ENCODE measurements at regions of chr22 and their contacts with region 1.

Region 1: DNA sequence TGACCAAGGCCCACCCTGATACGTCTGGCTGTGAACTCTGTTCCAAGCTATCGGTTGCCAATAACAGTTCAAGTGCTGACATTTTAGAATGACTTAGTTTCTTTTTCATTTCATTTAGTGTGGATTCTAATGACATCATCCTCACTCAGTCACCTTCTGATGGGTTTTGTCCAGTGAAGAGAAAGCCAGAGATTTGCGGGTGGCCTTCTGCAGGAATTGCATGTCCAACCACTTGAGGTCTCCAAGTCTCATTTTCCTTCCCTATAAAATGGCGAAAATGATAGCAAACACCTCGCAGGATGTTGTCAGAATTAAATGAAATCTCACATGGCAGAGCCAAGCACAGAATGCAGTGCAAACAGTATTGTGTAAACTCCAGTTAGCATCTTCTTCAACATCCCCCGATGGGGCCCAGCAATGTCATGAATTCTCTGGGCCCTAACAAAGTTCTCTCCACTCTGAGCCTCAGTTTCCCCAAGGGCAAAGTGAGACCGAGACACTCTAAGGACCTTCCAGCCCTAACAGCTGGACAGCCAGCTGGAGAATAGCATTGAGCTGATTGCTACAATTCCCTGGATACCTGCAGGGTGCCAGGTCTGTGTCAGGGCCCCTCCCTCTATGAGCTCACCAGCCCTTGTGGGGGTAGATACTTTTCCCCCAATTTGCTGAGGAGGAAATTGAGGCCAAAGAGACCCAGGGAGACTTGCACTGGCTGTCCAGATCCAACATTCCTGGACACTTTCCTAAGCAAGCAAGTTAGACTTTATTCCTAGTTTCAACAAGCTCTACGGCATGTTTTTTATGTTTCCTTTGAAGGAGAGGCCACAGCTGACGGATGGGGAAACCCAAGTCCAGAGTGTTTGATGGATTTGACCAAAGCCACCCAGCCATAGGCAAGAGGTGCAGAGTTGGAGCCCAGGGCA is 286.7 kb downstream of the MN1 start:
- DNase-seq: no peak
- H3K4me3 ChIP-seq: no peak overlapping the region
- H3K27ac ChIP-seq: peak overlapping the region in 1 of 2 donors; percentile 28
- H3K4me1 ChIP-seq: peaks cover 0 to 6% of the 10 kb centered on the region in 2 donors
- H3K27me3 ChIP-seq: no peaks in the 10 kb centered on the region
- CTCF ChIP-seq: no peak
- POLR2A ChIP-seq: no peak

Region 2: DNA sequence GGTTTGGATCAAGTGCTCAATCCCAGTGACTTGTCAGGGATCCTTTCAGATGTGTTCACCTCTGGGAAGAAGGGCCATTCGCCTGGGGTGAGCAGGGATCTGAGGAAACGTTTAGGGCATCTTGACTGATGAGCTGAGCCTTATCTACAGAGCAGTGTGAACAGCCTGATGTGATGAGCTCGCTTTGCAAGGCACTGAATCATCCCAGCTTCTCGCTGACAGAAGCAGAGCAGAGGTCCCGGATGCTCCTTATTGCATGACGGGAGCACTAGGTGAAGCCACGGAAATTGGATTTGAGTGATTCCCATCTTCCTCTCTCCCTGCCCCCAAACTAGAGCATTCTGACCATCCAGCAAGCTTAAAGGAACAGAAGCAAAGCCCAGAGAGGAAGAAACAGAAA is 1299.1 kb before region 1 on chr22:
- intact Hi-C with region 1: loop called (anchors 5 kb)
- DNase-seq: no peak
- H3K4me3 ChIP-seq: no peak overlapping the region
- H3K27ac ChIP-seq: no peak overlapping the region
- H3K4me1 ChIP-seq: no peaks in the 10 kb centered on the region
- H3K27me3 ChIP-seq: peaks cover 0 to 4% of the 10 kb centered on the region in 2 donors
- CTCF ChIP-seq: no peak
- POLR2A ChIP-seq: no peak

Region 3: DNA sequence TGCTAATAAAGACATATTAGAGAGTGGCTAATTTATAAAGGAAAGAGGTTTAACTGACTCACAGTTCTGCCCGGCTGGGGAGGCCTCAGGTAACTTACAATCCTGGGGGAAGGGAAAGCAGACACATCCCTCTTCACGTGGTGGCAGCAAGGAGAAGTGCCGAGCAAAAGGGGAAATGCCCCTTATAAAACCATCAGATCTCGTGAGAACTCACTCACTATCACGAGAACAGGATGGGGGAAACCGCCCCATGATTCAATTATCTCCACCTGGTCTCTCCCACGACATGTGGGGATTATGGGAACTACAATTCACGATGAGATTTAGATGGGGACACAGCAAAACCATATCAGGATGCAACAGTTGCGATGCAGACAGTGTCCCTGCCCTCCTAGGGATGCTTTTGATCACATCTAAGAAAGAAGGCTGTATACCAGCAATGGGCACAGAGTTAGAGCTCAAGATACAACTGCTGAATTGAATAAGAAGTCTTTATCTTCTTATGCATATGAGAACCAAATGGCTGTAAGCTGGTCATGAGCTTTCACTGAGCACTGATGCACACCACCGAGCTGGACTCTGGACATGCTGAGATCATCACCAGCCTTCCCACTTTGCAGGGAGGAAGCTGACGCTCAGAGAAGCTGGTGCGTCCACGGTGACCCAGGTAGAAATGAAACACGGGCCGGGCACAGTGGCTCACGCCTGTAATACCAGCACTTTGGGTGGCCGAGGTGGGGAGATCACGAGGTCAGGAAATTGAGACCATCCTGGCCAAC is 31.5 kb after region 1 on chr22:
- intact Hi-C with region 1: no loop called
- DNase-seq: no peak
- H3K4me3 ChIP-seq: no peak overlapping the region
- H3K27ac ChIP-seq: no peak overlapping the region
- H3K4me1 ChIP-seq: no peaks in the 10 kb centered on the region
- H3K27me3 ChIP-seq: peaks cover 0 to 6% of the 10 kb centered on the region in 2 donors
- CTCF ChIP-seq: no peak
- POLR2A ChIP-seq: no peak

Measured in breast epithelium (tissue), 4 donors.